Caco-2 (cell line): ENCODE measurements at regions of chr11 and their contacts with region 1.

Region 1: DNA sequence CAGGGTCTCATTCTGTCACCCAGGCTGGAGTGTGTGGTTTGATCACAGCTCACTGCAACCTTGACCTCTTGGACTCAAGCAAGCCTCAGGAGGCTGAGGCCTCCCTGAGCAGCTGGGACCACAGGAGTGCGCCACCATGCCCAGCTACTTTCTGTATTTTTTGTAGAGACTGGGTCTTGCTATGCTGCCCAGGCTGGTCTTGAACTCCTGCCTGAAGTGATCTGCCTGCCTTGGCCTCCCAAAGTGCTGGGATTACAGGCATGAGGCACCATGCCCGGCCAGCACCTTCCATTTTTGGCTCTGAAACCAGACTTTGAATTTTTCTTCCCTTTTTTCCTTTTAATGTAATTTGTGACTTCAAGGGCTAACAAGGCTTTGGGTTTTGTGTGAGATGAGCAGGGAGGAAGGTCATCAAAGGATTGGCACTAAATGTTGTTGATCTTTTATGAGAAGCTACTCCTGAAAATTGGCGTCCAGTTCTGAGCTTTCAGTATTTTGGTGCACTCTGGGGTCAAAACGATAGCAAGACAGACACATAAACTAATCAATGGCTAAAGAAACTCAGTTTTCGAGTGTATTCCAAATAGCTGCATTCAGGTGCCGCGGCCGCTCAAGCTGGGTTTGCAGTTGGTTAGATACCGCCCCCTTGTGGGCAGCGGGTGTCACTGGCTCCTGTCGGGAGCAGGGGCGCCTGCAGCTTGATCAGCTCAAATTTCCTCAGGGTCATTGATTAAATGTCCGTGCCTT is 51.9 kb upstream of the CLMP start:
- DNase-seq: peak; percentile 86 to 93
- H3K4me3 ChIP-seq: no peak overlapping the region
- H3K4me3 Mint-ChIP-seq: no peak overlapping the region
- H3K27ac Mint-ChIP-seq: no peak overlapping the region
- H3K4me1 ChIP-seq: no peaks in the 10 kb centered on the region
- H3K4me1 Mint-ChIP-seq: no peaks in the 10 kb centered on the region
- H3K27me3 ChIP-seq: no peaks in the 10 kb centered on the region
- H3K27me3 Mint-ChIP-seq: peaks cover 15% of the 10 kb centered on the region
- CTCF ChIP-seq: peak; percentile 99 to 100

Region 2: DNA sequence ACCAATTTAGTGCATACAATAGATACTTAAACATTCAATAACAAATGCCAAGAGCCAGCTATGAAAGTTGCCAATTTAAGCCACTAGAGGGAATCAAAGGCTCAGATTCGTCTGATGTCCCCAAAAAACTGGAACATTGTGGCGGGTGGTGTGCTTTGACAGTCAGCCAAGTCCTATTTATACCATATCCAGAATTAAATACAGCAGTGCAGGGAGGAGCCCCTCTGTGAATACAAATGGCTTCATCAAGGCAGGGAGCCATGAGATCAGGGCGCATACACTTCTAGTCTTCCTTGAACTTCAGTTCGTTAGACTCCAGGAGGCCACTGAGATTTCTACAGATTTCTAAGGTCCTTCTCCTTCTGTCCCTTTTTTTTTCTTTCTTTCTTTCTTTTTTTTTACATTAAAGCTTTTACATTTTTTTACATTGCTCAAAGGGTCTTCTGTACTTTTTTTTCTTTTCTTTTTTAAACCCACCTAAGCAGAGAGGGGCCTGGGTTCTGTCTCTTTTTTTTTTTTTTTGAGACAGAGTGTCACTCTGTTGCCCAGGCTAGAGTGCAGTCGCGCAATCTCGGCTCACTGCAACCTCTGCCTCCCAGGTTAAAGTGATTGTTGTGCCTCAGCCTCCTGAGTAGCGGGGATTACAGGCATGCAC is 143.5 kb before region 1 on chr11:
- CTCF ChIA-PET with region 1: interaction called, 98 read pairs
- POLR2A ChIA-PET with region 1: no interaction called
- intact Hi-C with region 1: loop called (anchors 1 kb)
- DNase-seq: peak; percentile 53 to 69
- H3K4me3 ChIP-seq: no peak overlapping the region
- H3K4me3 Mint-ChIP-seq: no peak overlapping the region
- H3K27ac Mint-ChIP-seq: no peak overlapping the region
- H3K4me1 ChIP-seq: peaks cover 10% of the 10 kb centered on the region
- H3K4me1 Mint-ChIP-seq: peaks cover 10% of the 10 kb centered on the region
- H3K27me3 ChIP-seq: no peaks in the 10 kb centered on the region
- H3K27me3 Mint-ChIP-seq: no peaks in the 10 kb centered on the region
- CTCF ChIP-seq: peak; percentile 83 to 91

Region 3: GRCh38 chr11:123166071-123166559 is 80.8 kb before region 1 on chr11:
- CTCF ChIA-PET with region 1: interaction called, 79 read pairs
- POLR2A ChIA-PET with region 1: interaction called, 3 read pairs
- intact Hi-C with region 1: loop called (anchors 1 kb)
- DNase-seq: peak; percentile 79 to 84
- H3K4me3 ChIP-seq: no peak overlapping the region
- H3K4me3 Mint-ChIP-seq: no peak overlapping the region
- H3K27ac Mint-ChIP-seq: peak overlapping the region; percentile 33
- H3K4me1 ChIP-seq: no peaks in the 10 kb centered on the region
- H3K4me1 Mint-ChIP-seq: peaks cover 10% of the 10 kb centered on the region
- H3K27me3 ChIP-seq: no peaks in the 10 kb centered on the region
- H3K27me3 Mint-ChIP-seq: no peaks in the 10 kb centered on the region
- CTCF ChIP-seq: peak; percentile 80 to 90

Region 4: DNA sequence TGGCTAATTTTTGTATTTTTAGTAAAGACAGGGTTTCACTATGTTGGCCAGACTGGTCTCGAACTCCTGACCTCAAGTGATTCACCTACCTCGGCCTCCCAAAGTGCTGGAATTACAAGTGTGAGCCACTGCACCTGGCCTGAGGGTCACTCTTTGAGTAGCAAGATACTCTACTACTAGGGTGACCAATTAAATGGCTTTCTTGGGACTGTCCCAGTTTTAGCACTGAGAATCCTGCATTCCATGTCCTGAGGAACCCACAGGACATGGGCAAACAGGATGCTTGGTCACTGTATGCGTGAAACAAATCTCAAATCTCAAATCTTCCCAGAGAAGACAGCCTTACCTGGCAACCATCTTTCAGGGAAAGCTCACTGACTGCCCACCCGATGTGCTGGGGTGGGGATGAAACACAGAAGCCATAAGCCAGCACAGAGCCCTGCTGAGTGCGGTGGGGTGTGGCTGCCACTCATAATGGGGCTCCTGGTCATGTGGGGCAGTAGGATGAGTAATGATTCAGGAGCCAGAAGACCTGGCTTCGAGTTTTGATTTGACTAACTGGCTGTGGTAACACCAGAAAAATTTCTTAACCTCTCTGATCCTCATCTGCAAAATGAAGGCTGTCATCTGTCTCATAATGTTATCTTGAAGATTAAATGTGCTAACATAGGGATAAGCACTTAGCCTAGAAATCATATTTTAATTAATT is 63.4 kb before region 1 on chr11:
- CTCF ChIA-PET with region 1: interaction called, 10 read pairs
- POLR2A ChIA-PET with region 1: no interaction called
- intact Hi-C with region 1: no loop called
- DNase-seq: no peak
- H3K4me3 ChIP-seq: no peak overlapping the region
- H3K4me3 Mint-ChIP-seq: no peak overlapping the region
- H3K27ac Mint-ChIP-seq: no peak overlapping the region
- H3K4me1 ChIP-seq: peaks cover 15% of the 10 kb centered on the region
- H3K4me1 Mint-ChIP-seq: peaks cover 11% of the 10 kb centered on the region
- H3K27me3 ChIP-seq: no peaks in the 10 kb centered on the region
- H3K27me3 Mint-ChIP-seq: no peaks in the 10 kb centered on the region
- CTCF ChIP-seq: no peak

Region 5: GRCh38 chr11:123261345-123262106 is 14.6 kb after region 1 on chr11:
- CTCF ChIA-PET with region 1: interaction called, 30 read pairs
- POLR2A ChIA-PET with region 1: no interaction called
- intact Hi-C with region 1: no loop called
- DNase-seq: peak; percentile 88 to 91
- H3K4me3 ChIP-seq: 0 out of 2 replicates have a peak overlapping the region, but pooled peaks have one; percentile 4
- H3K4me3 Mint-ChIP-seq: peak overlapping the region; percentile 62
- H3K27ac Mint-ChIP-seq: no peak overlapping the region
- H3K4me1 ChIP-seq: peaks cover 6% of the 10 kb centered on the region; the same call in 1 of the 2 replicates
- H3K4me1 Mint-ChIP-seq: no peaks in the 10 kb centered on the region
- H3K27me3 ChIP-seq: peaks cover 1% of the 10 kb centered on the region; the same call in 1 of the 2 replicates
- H3K27me3 Mint-ChIP-seq: peaks cover 18% of the 10 kb centered on the region
- CTCF ChIP-seq: peak; percentile 95 to 96

Region 6: DNA sequence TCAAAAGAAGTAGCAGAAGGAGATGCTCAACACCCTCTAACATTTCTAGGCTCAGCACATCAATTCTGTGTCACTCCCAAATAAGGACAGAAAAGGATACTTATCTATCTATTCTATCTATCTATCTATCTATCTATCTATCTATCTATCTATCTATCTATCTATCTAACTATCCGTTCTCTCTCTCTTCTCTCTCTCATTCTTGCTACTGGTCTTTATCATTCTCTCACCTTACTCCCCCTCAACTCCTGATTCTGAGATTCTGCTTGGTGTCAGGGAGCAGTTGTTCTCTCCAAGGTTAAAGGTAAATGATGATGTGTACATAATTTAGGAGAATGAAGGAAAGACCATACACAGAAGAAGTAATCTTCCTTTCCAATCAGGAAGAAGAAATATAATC is 748.2 kb after region 1 on chr11 and contains the start of gene OR10G6:
- CTCF ChIA-PET with region 1: no interaction called
- POLR2A ChIA-PET with region 1: no interaction called
- intact Hi-C with region 1: no loop called
- DNase-seq: no peak
- H3K4me3 ChIP-seq: no peak within 1 kb of the TSS
- H3K4me3 Mint-ChIP-seq: no peak within 1 kb of the TSS
- H3K27ac Mint-ChIP-seq: no peak within 1 kb of the TSS
- H3K4me1 ChIP-seq: peaks cover 8% of the 10 kb centered on the region; the same call in 1 of the 2 replicates
- H3K4me1 Mint-ChIP-seq: no peaks in the 10 kb centered on the region
- H3K27me3 ChIP-seq: 0 out of 2 replicates have a peak, but pooled peaks cover 2% of the 10 kb centered on the region
- H3K27me3 Mint-ChIP-seq: peaks cover 3% of the 10 kb centered on the region
- CTCF ChIP-seq: no peak
- total RNA-seq, gene OR10G6: not detected in 2 replicates